Activated CD4-positive, alpha-beta memory T cell treated with anti-CD3 and anti-CD28 coated beads, Interleukin-2, amount 10 ng/mL, durations not matched to agents 7 days and 5 days (primary cell): ENCODE measurements at regions of chr9 and their contacts with region 1.

Region 1: DNA sequence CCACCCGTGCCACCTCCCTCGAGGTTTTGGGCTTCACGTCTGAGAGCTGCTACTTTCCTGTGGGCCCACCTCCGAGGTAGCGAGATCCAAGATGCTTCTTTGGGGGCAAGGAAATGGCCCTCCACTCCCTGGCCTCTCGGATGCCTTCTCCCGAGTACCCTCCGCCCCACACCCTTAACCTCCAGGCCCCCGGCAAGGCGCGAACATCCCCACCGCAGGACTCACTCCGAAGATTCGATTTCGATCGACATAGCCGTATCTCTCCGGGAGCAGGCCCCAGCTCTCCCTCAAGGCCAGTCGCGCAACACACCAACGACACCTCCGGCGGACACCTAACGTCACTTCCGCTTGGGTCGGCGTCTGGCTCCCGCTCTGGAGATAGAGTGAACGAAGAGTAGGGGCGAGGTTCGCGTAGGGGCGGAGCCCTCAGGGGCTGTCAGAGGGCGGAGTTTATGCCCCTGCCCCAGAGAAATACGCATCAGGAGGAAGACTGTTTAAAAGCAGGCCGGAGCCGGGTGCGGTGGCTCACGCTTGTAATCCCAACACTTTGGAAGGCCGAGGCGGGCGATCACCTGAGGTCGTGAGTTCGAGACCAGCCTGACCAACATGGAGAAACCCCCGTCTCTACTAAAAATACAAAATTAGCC is at the start of gene SMU1:
- DNase-seq: peak; percentile 97
- H3K4me3 Mint-ChIP-seq: peak within 1 kb of the TSS; percentile 100
- H3K27ac Mint-ChIP-seq: peak within 1 kb of the TSS; percentile 99
- H3K4me1 Mint-ChIP-seq: peaks cover 52% of the 10 kb centered on the region
- H3K27me3 Mint-ChIP-seq: no peaks in the 10 kb centered on the region
- total RNA-seq, gene SMU1: 22.5 to 22.9 TPM

Region 2: GRCh38 chr9:33225319-33226149 is 149.1 kb after region 1 on chr9:
- CTCF ChIA-PET with region 1: interaction called, 26 read pairs
- POLR2A ChIA-PET with region 1: interaction called, 7 read pairs
- DNase-seq: peak; percentile 79
- H3K4me3 Mint-ChIP-seq: no peak overlapping the region
- H3K27ac Mint-ChIP-seq: peak overlapping the region; percentile 24
- H3K4me1 Mint-ChIP-seq: peaks cover 36% of the 10 kb centered on the region
- H3K27me3 Mint-ChIP-seq: no peaks in the 10 kb centered on the region

Region 3: GRCh38 chr9:33264473-33265177 is 188.1 kb after region 1 on chr9 and contains the starts of genes BAG1 and CHMP5:
- CTCF ChIA-PET with region 1: no interaction called
- POLR2A ChIA-PET with region 1: interaction called, 22 read pairs
- DNase-seq: peak; percentile 100
- H3K4me3 Mint-ChIP-seq: peak within 1 kb of the TSS; percentile 98
- H3K27ac Mint-ChIP-seq: peak within 1 kb of the TSS; percentile 97
- H3K4me1 Mint-ChIP-seq: peaks cover 66% of the 10 kb centered on the region
- H3K27me3 Mint-ChIP-seq: no peaks in the 10 kb centered on the region
- total RNA-seq, gene BAG1: 56.3 to 57.1 TPM
- total RNA-seq, gene CHMP5: 149 TPM

Region 4: DNA sequence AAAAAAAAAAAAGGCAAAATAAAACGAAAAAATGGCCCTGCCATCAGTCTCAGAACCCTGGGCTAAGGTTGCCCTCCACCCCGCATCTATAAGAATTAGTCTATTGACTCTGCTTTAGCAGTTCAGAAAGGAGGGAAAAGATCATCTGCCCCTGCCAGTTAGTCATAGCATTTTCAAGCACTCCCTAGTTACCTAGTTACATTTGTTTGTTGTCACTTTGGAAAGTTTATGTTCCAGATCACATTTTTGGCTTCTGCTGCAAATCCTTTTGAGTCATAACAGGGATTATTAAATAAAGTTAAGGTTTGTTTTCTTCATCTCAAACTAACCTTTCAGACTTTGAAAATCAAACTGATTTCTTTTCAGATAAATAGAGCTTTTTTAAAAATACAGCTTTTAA is 273.8 kb after region 1 on chr9:
- CTCF ChIA-PET with region 1: no interaction called
- POLR2A ChIA-PET with region 1: no interaction called
- DNase-seq: no peak
- H3K4me3 Mint-ChIP-seq: no peak overlapping the region
- H3K27ac Mint-ChIP-seq: no peak overlapping the region
- H3K4me1 Mint-ChIP-seq: peaks cover 11% of the 10 kb centered on the region
- H3K27me3 Mint-ChIP-seq: no peaks in the 10 kb centered on the region